Sciatic nerve (tissue), 2 donors: ENCODE measurements at regions of chr15 and their contacts with region 1.

Region 1: DNA sequence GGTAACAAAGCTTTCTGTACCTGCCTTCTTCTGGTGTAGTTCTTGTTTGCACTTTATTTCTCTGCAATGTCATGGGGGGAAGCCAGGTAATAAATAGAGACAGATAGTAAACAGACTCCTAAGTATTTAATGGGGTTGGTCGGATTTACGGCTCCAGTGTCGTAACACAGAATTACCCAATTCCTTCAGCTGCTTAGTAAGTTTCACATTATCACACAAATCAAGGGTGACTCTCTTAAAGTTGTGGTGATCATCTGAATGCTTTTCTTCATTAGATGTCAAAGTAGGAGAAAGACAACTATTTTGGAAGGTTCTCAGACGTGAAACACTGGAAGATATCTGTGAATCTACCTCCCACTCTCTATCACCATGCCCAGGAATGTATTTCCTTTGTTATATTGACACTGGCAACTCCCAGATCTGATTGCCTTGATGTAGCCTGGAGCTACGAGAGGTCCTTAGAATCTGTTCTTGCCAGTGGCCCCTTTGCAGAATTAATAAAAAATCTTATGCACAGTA is 25.0 kb upstream of the TMC3 start:
- DNase-seq: no peak
- ATAC-seq: peak; percentile 55

Region 2: DNA sequence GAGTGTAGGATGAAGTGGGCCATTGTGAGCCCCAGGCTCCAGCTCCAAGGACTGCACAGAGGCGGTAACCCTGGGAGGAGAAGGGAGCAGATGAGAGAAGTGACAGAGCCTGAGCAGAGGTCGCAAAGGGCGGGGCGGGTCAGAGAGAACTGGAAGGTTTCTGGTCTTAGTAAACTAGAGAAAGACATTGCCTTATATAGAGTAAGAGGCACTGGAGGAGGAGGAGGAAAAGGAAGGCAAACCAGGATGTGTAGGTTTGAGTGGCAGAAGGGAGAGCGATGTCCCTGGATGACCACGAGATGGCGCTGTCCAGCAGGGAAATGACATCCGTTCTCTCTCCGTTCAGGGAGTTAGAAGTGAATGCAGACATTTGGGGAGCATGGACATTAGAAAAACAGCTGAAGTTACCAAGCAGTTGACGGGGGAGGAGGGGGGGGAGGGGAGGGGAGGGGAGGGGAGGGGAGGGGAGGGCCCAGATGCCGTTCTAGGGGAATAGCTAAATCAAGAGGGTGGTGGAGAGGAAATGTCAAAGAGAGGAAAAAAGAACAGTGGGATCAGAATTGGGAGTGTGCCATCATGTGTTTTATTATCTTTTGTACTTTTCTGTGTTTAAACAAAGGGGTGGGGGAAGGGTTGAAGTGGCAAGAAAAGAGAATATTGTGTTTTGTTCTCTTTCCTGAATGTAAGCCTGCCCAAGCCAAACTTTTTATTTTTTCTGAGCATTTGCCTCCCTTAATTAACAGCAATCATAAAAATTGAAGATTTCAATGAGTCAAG is 123.9 kb before region 1 on chr15:
- intact Hi-C with region 1: loop called (anchors 10 kb)
- DNase-seq: peak; percentile 89
- ATAC-seq: peak; percentile 87